CD8-positive, alpha-beta T cell (primary cell): ENCODE measurements at regions of chr6 and their contacts with region 1.

Region 1: DNA sequence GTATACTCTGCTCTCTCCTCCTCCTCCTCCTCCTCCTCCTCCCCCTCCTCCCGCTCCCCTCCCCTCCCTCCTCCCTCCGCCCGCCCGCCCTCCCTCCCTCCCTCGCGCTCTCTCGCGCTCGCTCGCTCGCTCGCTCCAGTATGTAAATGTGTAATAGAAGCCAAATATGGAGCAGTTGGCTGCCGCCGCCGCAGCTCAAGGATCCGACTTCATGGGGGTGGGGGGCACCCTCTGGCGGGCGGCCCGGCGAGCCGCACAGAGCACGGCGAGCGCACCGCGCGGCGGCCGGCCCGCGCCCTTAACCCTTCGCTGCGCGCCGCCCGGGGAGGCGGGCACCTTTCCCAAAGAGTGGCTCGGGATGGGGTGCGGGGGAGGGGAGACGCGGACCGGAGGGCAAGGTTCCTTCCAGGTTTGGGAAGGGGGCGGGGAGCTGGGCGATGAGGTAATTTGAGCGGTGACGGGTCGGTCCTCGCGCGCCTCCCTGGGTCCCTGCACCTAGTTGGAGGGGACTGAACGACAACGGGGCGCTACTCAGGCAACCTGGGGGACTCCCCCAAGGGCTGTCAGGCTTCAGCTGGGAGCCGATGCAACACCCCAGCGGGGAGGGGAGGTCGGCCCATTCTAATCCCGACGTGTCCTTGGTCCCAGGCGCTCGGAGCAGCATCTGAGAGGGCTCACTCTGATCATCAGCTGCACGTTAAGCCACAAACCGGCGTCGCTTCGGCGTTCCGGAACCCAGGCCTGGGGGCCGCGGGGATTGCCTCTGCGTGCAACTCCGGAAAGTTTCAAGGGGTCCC is 409 bp upstream of the ATXN1 start:
- DNase-seq: peak; percentile 72 to 93 (median 83)
- ATAC-seq: peak; percentile 56
- H3K4me3 ChIP-seq: peak overlapping the region; percentile 76 to 79
- H3K4me3 Mint-ChIP-seq: peak overlapping the region; percentile 97
- H3K27ac ChIP-seq: peak overlapping the region; percentile 93 to 96
- H3K27ac Mint-ChIP-seq: peak overlapping the region; percentile 99
- H3K4me1 ChIP-seq: peaks cover 30% of the 10 kb centered on the region
- H3K4me1 Mint-ChIP-seq: peaks cover 61% of the 10 kb centered on the region
- H3K27me3 ChIP-seq: no peaks in the 10 kb centered on the region
- H3K27me3 Mint-ChIP-seq: no peaks in the 10 kb centered on the region
- CTCF ChIP-seq: no peak

Region 2: GRCh38 chr6:15662326-15663129 is 1099.1 kb before region 1 on chr6 and contains the start of gene DTNBP1:
- CTCF ChIA-PET with region 1: no interaction called
- POLR2A ChIA-PET with region 1: no interaction called
- intact Hi-C with region 1: loop called in 1 of 2 experiments (anchors 5 kb)
- DNase-seq: peak; percentile 58 to 90 (median 82)
- ATAC-seq: peak; percentile 73
- H3K4me3 ChIP-seq: peak within 1 kb of the TSS; percentile 67 to 76
- H3K4me3 Mint-ChIP-seq: peak within 1 kb of the TSS; percentile 83
- H3K27ac ChIP-seq: peak within 1 kb of the TSS; percentile 55 to 73
- H3K27ac Mint-ChIP-seq: peak within 1 kb of the TSS; percentile 73
- H3K4me1 ChIP-seq: peaks cover 7% of the 10 kb centered on the region
- H3K4me1 Mint-ChIP-seq: peaks cover 41% of the 10 kb centered on the region
- H3K27me3 ChIP-seq: no peaks in the 10 kb centered on the region
- H3K27me3 Mint-ChIP-seq: peaks cover 2% of the 10 kb centered on the region
- CTCF ChIP-seq: no peak
- total RNA-seq, gene DTNBP1: 12.3 to 12.6 TPM

Region 3: GRCh38 chr6:16305246-16305725 is 456.4 kb before region 1 on chr6:
- CTCF ChIA-PET with region 1: no interaction called
- POLR2A ChIA-PET with region 1: no interaction called
- intact Hi-C with region 1: no loop called
- DNase-seq: no peak
- ATAC-seq: no peak
- H3K4me3 ChIP-seq: no peak overlapping the region
- H3K4me3 Mint-ChIP-seq: no peak overlapping the region
- H3K27ac ChIP-seq: no peak overlapping the region
- H3K27ac Mint-ChIP-seq: no peak overlapping the region
- H3K4me1 ChIP-seq: no peaks in the 10 kb centered on the region
- H3K4me1 Mint-ChIP-seq: no peaks in the 10 kb centered on the region
- H3K27me3 ChIP-seq: no peaks in the 10 kb centered on the region
- H3K27me3 Mint-ChIP-seq: no peaks in the 10 kb centered on the region
- CTCF ChIP-seq: no peak

Region 4: GRCh38 chr6:16332175-16332542 is 429.5 kb before region 1 on chr6:
- CTCF ChIA-PET with region 1: interaction called, 11 read pairs
- POLR2A ChIA-PET with region 1: no interaction called
- intact Hi-C with region 1: loop called in 1 of 2 experiments (anchors 2 kb)
- DNase-seq: peak; percentile 61 to 90 (median 81)
- ATAC-seq: peak; percentile 97
- H3K4me3 ChIP-seq: peak overlapping the region in 1 of 2 experiments; percentile 27
- H3K4me3 Mint-ChIP-seq: no peak overlapping the region
- H3K27ac ChIP-seq: no peak overlapping the region
- H3K27ac Mint-ChIP-seq: no peak overlapping the region
- H3K4me1 ChIP-seq: peaks cover 10% of the 10 kb centered on the region
- H3K4me1 Mint-ChIP-seq: no peaks in the 10 kb centered on the region
- H3K27me3 ChIP-seq: no peaks in the 10 kb centered on the region
- H3K27me3 Mint-ChIP-seq: no peaks in the 10 kb centered on the region
- CTCF ChIP-seq: peak; percentile 67

Region 5: DNA sequence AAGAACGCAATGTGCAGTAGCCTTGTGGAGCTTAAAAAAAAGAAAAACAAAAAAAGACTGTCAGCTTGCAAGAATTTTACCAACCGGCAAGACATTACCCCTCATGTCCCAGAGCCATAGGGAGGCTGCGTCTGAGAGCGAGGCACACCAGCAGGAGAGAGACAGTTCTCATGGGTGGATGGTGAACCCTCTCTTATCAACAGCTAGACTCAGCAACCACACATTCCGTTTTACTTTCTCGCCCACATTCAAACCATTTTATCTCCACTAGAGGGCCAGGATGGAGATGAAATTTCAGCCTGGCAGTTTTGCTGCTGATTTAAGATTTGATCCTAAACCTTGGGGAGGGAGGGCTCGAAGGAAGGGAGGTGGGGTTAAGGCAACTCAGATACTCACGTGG is 247.4 kb before region 1 on chr6:
- CTCF ChIA-PET with region 1: interaction called, 29 read pairs
- POLR2A ChIA-PET with region 1: no interaction called
- intact Hi-C with region 1: loop called in 1 of 2 experiments (anchors 2 kb)
- DNase-seq: peak in 5 of 9 experiments; percentile 19 to 68 (median 26)
- ATAC-seq: peak; percentile 37
- H3K4me3 ChIP-seq: no peak overlapping the region
- H3K4me3 Mint-ChIP-seq: no peak overlapping the region
- H3K27ac ChIP-seq: no peak overlapping the region
- H3K27ac Mint-ChIP-seq: peak overlapping the region; percentile 73
- H3K4me1 ChIP-seq: peaks cover 43% of the 10 kb centered on the region
- H3K4me1 Mint-ChIP-seq: peaks cover 64% of the 10 kb centered on the region
- H3K27me3 ChIP-seq: no peaks in the 10 kb centered on the region
- H3K27me3 Mint-ChIP-seq: no peaks in the 10 kb centered on the region
- CTCF ChIP-seq: no peak

Region 6: DNA sequence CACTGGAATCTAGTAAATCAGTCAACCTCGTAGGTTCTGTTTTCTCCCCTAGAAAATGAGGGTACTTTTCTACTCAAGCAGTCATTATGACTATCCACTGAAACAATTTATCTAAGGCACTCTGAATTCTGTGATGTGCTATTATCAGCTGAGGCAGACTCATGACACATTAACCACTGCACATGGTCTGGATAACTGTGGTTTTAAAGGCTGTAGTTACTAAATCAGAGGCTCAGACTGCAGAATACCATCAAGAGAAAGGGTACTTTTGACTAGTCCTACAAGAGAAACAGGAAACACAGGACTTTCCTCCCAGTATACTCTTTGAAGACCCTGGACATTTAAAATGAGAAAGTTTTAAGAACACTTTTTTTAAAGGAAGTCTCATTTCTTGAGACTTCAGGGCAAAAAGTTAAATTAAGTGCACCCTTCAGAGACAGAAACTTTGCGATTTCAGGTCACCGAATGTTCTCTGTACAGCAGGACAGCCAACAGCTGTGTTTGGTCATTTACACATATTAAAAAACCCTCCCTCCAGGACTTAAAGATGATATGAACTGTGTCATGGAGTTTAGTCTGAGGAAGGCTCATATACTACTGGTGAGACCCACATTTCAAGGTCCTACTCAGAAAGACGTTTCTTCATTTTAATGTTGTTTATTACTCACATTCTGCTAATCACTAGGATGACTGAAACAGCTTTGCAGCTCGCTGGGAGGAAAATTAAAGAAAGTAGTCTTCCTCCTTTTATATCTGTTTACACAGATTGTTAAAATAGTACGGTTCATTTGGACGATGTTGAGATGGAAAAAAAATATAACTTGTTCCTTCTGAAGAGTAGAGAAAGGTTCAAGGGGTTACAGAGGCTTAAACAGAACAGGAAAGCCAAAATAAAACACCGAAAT is 20.3 kb before region 1 on chr6:
- CTCF ChIA-PET with region 1: interaction called, 15 read pairs
- POLR2A ChIA-PET with region 1: interaction called, 9 read pairs
- intact Hi-C with region 1: loop called in 1 of 2 experiments (anchors 2 kb)
- DNase-seq: peak in 2 of 9 experiments; percentile 43 to 63
- ATAC-seq: peak; percentile 66
- H3K4me3 ChIP-seq: no peak overlapping the region
- H3K4me3 Mint-ChIP-seq: no peak overlapping the region
- H3K27ac ChIP-seq: no peak overlapping the region
- H3K27ac Mint-ChIP-seq: peak overlapping the region; percentile 20
- H3K4me1 ChIP-seq: peaks cover 4% of the 10 kb centered on the region
- H3K4me1 Mint-ChIP-seq: peaks cover 69% of the 10 kb centered on the region
- H3K27me3 ChIP-seq: no peaks in the 10 kb centered on the region
- H3K27me3 Mint-ChIP-seq: no peaks in the 10 kb centered on the region
- CTCF ChIP-seq: no peak

Region 7: DNA sequence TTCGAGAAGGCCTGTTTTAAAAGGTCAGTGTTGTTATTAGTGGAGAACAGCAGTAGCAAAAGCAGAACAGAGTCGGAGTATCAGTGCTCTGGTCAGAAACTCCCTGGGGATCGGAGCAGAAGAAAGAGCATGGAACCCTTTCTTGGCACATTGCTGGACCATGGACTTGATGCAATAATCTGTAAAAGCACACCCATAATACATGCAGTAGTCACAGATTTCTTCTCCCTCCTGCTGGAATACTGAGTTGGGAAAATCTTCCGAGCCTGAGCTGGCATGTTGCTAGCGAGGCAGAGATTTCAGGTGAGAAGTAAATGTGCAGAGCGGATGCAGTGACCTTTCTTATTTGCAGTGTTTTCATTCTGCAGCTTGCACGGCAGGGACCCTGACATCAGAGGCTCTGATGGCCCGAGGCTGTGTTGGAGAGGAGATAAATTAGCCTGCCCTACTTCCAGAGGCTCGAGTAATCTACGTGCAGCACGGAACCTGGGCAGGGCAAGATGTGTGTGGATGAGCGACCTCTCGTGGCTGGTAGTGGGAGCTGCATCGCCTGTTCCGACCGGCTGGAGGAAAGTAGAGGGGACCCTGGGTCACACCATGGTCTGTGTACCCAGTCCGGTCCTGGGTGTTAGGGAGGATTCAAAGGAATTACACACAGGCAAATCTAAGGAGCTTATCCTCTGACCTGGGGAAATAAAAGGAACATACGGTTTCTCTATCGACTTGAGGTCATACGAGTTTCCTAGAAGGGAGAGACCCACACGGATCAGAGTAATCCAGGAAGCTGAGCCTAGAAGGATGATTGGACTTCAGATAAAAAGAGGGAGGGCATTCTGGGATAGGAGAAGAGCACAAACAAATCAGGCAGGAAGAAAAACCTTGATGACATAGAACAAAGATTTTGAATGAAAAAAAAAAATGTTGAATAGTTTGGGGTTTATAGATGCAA is 203.2 kb after region 1 on chr6:
- CTCF ChIA-PET with region 1: interaction called, 3 read pairs
- POLR2A ChIA-PET with region 1: no interaction called
- intact Hi-C with region 1: loop called (anchors 2 kb)
- DNase-seq: peak; percentile 34 to 72 (median 59)
- ATAC-seq: peak; percentile 92
- H3K4me3 ChIP-seq: no peak overlapping the region
- H3K4me3 Mint-ChIP-seq: no peak overlapping the region
- H3K27ac ChIP-seq: no peak overlapping the region
- H3K27ac Mint-ChIP-seq: no peak overlapping the region
- H3K4me1 ChIP-seq: peaks cover 4% of the 10 kb centered on the region
- H3K4me1 Mint-ChIP-seq: peaks cover 6% of the 10 kb centered on the region
- H3K27me3 ChIP-seq: no peaks in the 10 kb centered on the region
- H3K27me3 Mint-ChIP-seq: peaks cover 14% of the 10 kb centered on the region
- CTCF ChIP-seq: peak; percentile 67

Region 8: DNA sequence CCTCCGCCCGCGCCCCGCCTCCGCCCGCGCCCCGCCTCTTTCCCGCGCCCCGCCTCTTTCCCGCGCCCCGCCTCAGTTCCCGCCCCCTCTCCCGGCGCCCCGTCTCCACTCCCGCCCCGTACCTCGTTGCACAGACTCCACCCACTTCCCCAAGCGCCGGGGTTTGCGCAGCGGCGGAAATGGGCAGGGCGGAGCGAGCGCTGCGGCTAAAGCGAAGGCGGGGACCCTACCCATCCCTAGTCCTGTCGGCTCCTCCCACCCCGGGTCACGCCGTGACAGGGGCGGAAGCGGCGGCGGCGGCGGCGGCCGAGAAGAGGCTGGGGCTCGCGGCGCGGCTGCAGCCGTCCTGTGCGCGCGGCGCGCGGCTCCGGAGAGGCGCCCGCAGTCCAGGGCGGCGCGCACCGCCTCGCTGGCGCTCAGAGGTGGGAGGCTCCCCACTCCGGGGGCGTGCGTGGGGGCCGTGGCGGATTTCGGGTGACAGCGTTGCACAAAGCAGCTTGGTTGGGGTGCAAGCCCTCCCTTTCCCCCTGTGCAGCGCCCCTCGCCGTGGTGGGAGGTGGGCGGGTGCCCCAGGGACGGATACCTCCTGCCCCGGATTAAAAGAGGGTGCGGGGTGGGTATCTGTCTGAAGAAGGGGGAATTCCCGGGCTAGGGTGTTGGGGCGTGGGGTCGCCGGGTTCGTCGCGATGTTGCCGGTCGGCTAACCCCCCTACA is 1393.6 kb after region 1 on chr6 and contains the start of gene KDM1B:
- CTCF ChIA-PET with region 1: no interaction called
- POLR2A ChIA-PET with region 1: no interaction called
- intact Hi-C with region 1: loop called in 1 of 2 experiments (anchors 5 kb)
- DNase-seq: peak; percentile 97 to 99 (median 99)
- ATAC-seq: peak; percentile 93
- H3K4me3 ChIP-seq: peak within 1 kb of the TSS; percentile 89 to 99
- H3K4me3 Mint-ChIP-seq: peak within 1 kb of the TSS; percentile 98
- H3K27ac ChIP-seq: peak within 1 kb of the TSS; percentile 90
- H3K27ac Mint-ChIP-seq: peak within 1 kb of the TSS; percentile 96
- H3K4me1 ChIP-seq: peaks cover 15% of the 10 kb centered on the region
- H3K4me1 Mint-ChIP-seq: peaks cover 38% of the 10 kb centered on the region
- H3K27me3 ChIP-seq: no peaks in the 10 kb centered on the region
- H3K27me3 Mint-ChIP-seq: no peaks in the 10 kb centered on the region
- CTCF ChIP-seq: no peak
- total RNA-seq, gene KDM1B: 4.5 to 6.2 TPM